Activated CD8-positive, alpha-beta T cell treated with anti-CD3 and anti-CD28 coated beads for 36 hours (primary cell): ENCODE measurements at regions of chr4 and their contacts with region 1.

Region 1: DNA sequence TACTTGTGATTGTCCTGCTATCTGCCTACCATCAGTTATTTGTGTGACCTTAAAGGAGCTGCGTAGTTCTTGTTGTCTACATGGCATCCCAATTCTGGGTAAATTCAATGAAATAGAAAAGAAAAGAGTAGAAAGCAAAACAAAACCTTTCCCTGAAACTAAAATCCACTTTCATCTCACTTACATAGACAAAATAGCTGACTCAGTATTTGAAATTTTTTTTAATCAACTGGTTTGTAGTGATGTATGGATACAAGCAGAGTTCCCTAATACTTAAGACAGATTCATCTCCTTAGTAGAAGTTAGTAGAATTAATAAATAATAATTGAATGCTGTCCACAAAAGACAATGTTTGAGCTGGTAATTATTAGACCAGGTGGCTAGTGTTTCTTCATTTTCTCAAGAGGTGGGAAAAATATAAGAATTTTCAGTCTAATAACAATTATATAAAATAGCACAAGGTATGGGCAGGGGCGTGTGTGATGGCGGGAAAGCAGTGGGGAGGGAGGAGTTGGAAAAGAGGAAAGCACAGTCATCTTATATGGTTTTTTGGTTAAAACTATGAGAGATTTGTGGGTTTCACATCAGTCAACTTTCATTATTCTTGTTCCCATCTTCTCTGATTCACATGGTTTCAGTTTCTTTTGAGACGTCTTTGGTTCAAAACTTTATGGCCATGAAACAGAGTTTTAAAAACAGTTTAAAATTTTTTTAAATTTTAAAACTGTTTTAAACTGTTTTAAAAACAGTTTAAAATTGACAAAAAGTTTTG is 275.2 kb downstream of the SPRY1 start:
- DNase-seq: peak; percentile 51
- ATAC-seq: peak; percentile 82
- H3K4me3 Mint-ChIP-seq: no peak overlapping the region
- H3K27ac Mint-ChIP-seq: no peak overlapping the region
- H3K4me1 Mint-ChIP-seq: peaks cover 14% of the 10 kb centered on the region
- H3K27me3 Mint-ChIP-seq: peaks cover 34% of the 10 kb centered on the region
- CTCF ChIP-seq: no peak

Region 2: DNA sequence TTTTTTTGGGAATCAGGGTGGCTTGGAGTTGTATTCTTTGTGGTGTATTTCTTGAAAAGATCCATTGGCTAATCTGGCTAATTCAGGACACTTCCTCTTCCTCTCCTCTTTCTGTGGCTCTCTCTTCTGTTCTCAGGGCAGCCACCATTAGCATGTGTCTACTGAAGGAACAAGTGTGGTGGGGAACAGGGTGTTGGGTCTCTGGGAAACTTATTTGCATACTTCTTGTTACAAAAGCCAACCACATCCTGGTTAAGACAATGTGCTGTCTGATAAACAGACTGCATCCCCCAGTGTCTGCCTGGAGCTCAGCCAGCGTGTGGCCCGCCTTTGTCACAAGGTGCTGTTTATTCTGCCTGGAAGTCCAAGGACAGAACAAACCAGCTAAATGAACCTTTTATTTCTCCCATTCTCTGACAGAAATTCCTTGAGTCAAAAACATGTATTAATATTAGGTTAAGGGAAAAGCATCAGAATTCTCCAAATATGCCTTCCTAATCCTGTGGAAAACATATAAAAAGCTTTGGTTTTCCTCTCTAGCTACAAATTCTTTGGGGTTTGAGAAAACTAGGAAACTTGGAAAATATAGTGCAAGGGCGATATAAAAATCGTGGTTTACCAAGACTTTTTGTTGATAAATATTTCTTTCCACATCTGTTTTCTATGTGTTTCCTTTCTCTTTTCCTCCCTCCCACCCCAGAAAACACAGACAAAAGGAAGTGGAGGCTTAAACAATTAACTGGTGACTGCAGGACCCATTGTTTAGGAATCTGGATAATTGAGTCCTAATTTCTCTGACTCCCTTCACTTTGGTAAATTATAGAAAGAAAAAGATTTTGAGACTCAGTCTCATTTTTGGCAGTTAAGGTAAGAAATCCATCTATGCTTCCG is 71.7 kb before region 1 on chr4:
- CTCF ChIA-PET with region 1: no interaction called
- POLR2A ChIA-PET with region 1: no interaction called
- intact Hi-C with region 1: loop called (anchors 5 kb)
- DNase-seq: peak; percentile 82
- ATAC-seq: peak; percentile 93
- H3K4me3 Mint-ChIP-seq: peak overlapping the region; percentile 5
- H3K27ac Mint-ChIP-seq: peak overlapping the region; percentile 87
- H3K4me1 Mint-ChIP-seq: peaks cover 54% of the 10 kb centered on the region
- H3K27me3 Mint-ChIP-seq: no peaks in the 10 kb centered on the region
- CTCF ChIP-seq: no peak

Region 3: GRCh38 chr4:123649645-123650391 is 22.0 kb before region 1 on chr4:
- CTCF ChIA-PET with region 1: no interaction called
- POLR2A ChIA-PET with region 1: no interaction called
- intact Hi-C with region 1: no loop called
- DNase-seq: no peak
- ATAC-seq: no peak
- H3K4me3 Mint-ChIP-seq: no peak overlapping the region
- H3K27ac Mint-ChIP-seq: no peak overlapping the region
- H3K4me1 Mint-ChIP-seq: no peaks in the 10 kb centered on the region
- H3K27me3 Mint-ChIP-seq: no peaks in the 10 kb centered on the region
- CTCF ChIP-seq: no peak